ENCODE measurements at regions of chr5 and their contacts with region 1.

Region 1: GRCh38 chr5:135829681-135830383 is 4.6 kb upstream of the SLC25A48 start:
- DNase-seq: peak; percentile 61 to 88 (median 71)
- H3K4me3 ChIP-seq: no peak overlapping the region
- H3K27ac ChIP-seq: no peak overlapping the region
- H3K4me1 ChIP-seq: no peaks in the 10 kb centered on the region
- H3K27me3 ChIP-seq: peaks cover 32% of the 10 kb centered on the region
- CTCF ChIP-seq: peak; percentile 62 to 70 (median 68)
- POLR2A ChIP-seq: no peak

Region 2: GRCh38 chr5:135473927-135474641 is 355.7 kb before region 1 on chr5:
- intact Hi-C with region 1: loop called in 1 of 2 experiments (anchors 5 kb)
- DNase-seq: no peak
- H3K4me3 ChIP-seq: no peak overlapping the region
- H3K27ac ChIP-seq: no peak overlapping the region
- H3K4me1 ChIP-seq: no peaks in the 10 kb centered on the region
- H3K27me3 ChIP-seq: peaks cover 7% of the 10 kb centered on the region
- CTCF ChIP-seq: no peak
- POLR2A ChIP-seq: no peak

Region 3: DNA sequence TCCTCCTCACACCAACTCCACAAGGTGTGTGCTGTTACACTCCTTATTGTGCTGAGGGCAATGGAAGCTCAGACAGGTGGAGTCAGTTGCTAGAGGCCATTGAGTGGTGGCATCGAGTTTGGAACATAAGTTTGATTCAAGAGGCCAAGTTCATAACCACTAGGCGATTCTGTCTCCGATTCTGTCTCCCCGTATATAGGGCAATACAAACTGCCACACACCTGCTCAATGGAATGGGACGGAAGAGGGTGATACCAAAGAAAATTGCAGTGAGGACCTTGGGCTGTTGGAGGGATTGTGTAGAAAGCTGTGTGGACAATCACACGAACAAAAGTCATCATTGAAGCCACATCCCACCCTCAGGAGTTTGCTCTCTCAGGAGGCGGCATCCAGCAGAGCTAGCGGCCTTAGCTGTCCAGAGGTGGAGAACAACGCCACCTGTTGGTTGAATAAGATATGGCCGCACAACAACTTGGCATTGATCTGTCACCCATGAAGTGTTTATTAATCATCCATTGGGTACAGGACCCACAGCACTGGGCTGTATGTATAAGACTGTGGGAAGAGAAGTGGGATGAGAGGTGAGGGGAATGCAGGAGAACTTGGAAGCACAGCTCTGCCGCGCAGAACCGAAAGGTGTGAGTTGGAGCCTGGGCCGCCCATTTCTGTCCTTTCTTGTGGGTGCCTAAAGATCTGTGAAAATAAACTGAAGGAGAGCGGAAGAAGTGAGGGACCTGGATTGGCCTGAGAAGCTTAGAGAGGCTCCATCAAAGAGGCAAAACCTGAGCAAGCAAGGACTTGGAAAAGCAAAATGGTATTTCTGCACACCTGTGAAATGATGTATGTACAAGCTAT is 278.0 kb before region 1 on chr5:
- intact Hi-C with region 1: loop called in 1 of 2 experiments (anchors 5 kb)
- DNase-seq: peak; percentile 69 to 91 (median 77)
- H3K4me3 ChIP-seq: no peak overlapping the region
- H3K27ac ChIP-seq: no peak overlapping the region
- H3K4me1 ChIP-seq: no peaks in the 10 kb centered on the region
- H3K27me3 ChIP-seq: peaks cover 23% of the 10 kb centered on the region
- CTCF ChIP-seq: peak; percentile 85 to 90 (median 88)
- POLR2A ChIP-seq: no peak

Region 4: DNA sequence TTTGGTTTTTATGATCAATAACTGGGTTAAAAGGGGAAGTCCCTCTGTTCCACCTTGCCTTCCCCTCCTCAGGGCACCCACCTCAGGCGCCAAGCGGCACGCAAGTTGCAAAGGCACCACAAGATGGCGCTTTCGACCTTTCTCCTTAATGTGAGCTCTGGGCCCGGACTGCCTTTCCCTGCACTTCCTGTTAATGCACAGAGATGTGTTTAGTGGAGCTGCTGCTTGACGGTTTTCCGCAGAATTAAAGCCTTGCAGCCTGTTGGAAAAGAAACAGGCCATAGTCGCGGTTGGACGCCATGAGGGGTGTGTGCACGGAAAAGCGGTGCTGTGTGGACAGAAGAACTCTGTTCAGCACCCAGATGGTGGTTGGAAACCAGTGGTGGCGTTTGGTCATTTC is 269.0 kb before region 1 on chr5:
- intact Hi-C with region 1: loop called in 1 of 2 experiments (anchors 2 kb)
- DNase-seq: peak; percentile 66 to 88 (median 82)
- H3K4me3 ChIP-seq: no peak overlapping the region
- H3K27ac ChIP-seq: no peak overlapping the region
- H3K4me1 ChIP-seq: no peaks in the 10 kb centered on the region
- H3K27me3 ChIP-seq: peaks cover 6% of the 10 kb centered on the region
- CTCF ChIP-seq: peak; percentile 55 to 77 (median 74)
- POLR2A ChIP-seq: no peak